Activated CD8-positive, alpha-beta T cell treated with anti-CD3 and anti-CD28 coated beads, Interleukin-2, amount 10 ng/mL, durations not matched to agents 7 days and 5 days (primary cell): ENCODE measurements at regions of chr12 and their contacts with region 1.

Region 1: GRCh38 chr12:69359531-69360347 is at the start of gene YEATS4:
- DNase-seq: peak; percentile 94
- ATAC-seq: peak; percentile 88
- H3K4me3 Mint-ChIP-seq: peak within 1 kb of the TSS; percentile 95
- H3K27ac Mint-ChIP-seq: peak within 1 kb of the TSS; percentile 92
- H3K4me1 Mint-ChIP-seq: peaks cover 33% of the 10 kb centered on the region
- H3K27me3 Mint-ChIP-seq: peaks cover 5% of the 10 kb centered on the region
- total RNA-seq, gene YEATS4: 49.9 to 51.0 TPM

Region 2: DNA sequence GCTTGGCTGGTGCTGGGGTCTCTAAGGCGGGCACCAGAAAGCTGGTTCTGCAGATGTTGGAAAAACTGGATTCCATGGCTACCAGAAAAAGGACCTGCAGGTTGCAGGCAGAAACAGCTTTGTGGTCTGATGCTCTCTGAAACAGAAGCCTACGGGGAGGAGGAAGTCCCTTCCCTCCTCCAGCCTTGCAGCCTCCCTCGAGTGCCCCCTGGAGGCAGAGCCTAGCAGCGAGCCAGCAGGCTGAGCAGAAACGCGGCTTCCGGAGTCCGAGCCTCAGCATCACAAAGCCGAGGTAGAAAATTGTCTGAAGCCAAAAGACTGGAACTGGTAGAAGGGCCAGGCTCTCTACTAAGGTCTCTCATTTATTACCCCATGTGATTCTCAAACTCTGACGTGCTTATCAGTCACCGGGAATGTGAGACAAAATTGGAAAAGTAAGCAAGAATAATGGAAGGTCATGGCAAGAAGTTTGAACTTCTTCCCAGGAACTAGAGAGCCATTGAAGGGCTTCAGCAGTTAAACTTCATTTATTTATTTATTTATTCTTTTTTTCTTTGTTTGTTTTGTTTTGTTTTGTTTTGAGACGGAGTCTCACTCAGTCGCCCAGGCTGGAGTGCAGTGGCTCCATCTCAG is 202.6 kb before region 1 on chr12:
- CTCF ChIA-PET with region 1: interaction called, 22 read pairs
- POLR2A ChIA-PET with region 1: interaction called, 6 read pairs
- DNase-seq: peak; percentile 95
- ATAC-seq: peak; percentile 93
- H3K4me3 Mint-ChIP-seq: peak overlapping the region; percentile 34
- H3K27ac Mint-ChIP-seq: peak overlapping the region; percentile 53
- H3K4me1 Mint-ChIP-seq: peaks cover 48% of the 10 kb centered on the region
- H3K27me3 Mint-ChIP-seq: peaks cover 3% of the 10 kb centered on the region

Region 3: DNA sequence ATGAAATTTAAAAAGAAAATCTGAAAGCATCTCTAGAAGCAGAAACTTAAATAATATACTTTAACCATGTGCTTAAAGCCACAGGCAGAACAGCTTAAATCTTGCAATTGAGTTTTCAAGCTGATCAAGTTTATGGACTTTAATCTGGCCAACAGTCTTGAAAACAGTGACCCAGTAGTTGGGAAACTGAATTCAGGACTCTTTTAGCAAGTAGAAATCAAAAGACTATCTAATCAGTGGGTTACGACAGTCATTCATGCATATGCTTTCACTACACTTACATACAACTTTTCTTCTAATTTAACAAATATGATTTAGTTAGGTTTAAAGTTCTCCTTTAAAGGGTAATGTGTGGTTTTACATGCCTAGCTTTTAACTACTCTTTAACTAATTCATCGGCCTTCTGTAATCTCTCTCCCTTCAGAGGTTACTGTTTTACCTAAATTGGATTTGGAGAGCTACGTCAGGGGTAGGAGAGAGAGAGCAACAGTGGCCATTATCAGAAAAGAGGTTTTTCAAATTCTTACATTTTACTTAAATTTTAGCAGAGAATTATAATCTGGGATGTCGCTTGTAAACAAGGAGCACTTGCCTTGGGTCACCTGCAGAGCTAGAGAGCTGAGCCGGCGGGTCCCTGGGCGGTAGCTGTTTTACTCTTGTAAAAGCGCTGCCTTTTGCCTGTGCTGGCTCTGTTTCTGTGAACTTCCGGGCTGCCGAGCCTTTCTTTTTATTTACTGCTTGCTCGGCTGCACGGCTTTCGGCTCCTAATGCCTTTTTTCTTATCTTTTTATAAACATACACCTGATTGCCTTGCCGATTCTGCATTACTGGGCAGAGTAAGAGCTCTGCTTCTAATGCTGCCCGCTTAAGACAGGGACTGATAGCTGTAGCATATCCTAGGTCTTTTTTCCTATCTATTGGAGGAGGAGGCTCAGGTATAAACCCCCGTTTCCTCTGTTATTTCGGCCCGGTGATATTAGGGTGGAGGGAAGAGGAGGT is 29.0 kb before region 1 on chr12:
- CTCF ChIA-PET with region 1: interaction called, 22 read pairs
- POLR2A ChIA-PET with region 1: interaction called, 18 read pairs
- DNase-seq: peak; percentile 73
- ATAC-seq: peak; percentile 85
- H3K4me3 Mint-ChIP-seq: peak overlapping the region; percentile 79
- H3K27ac Mint-ChIP-seq: peak overlapping the region; percentile 92
- H3K4me1 Mint-ChIP-seq: peaks cover 43% of the 10 kb centered on the region
- H3K27me3 Mint-ChIP-seq: no peaks in the 10 kb centered on the region

Region 4: GRCh38 chr12:69348162-69348938 is 11.4 kb before region 1 on chr12 and contains the start of gene LYZ:
- CTCF ChIA-PET with region 1: interaction called, 20 read pairs
- POLR2A ChIA-PET with region 1: no interaction called
- DNase-seq: no peak
- ATAC-seq: no peak
- H3K4me3 Mint-ChIP-seq: no peak within 1 kb of the TSS
- H3K27ac Mint-ChIP-seq: no peak within 1 kb of the TSS
- H3K4me1 Mint-ChIP-seq: peaks cover 5% of the 10 kb centered on the region
- H3K27me3 Mint-ChIP-seq: peaks cover 8% of the 10 kb centered on the region
- total RNA-seq, gene LYZ: not detected

Region 5: GRCh38 chr12:69470189-69471075 is 110.7 kb after region 1 on chr12 and contains the start of gene FRS2:
- CTCF ChIA-PET with region 1: interaction called, 10 read pairs
- POLR2A ChIA-PET with region 1: interaction called, 4 read pairs
- DNase-seq: peak; percentile 89
- ATAC-seq: peak; percentile 99
- H3K4me3 Mint-ChIP-seq: peak within 1 kb of the TSS; percentile 98
- H3K27ac Mint-ChIP-seq: peak within 1 kb of the TSS; percentile 97
- H3K4me1 Mint-ChIP-seq: peaks cover 34% of the 10 kb centered on the region
- H3K27me3 Mint-ChIP-seq: no peaks in the 10 kb centered on the region
- total RNA-seq, gene FRS2: 13.0 to 13.7 TPM

Region 6: DNA sequence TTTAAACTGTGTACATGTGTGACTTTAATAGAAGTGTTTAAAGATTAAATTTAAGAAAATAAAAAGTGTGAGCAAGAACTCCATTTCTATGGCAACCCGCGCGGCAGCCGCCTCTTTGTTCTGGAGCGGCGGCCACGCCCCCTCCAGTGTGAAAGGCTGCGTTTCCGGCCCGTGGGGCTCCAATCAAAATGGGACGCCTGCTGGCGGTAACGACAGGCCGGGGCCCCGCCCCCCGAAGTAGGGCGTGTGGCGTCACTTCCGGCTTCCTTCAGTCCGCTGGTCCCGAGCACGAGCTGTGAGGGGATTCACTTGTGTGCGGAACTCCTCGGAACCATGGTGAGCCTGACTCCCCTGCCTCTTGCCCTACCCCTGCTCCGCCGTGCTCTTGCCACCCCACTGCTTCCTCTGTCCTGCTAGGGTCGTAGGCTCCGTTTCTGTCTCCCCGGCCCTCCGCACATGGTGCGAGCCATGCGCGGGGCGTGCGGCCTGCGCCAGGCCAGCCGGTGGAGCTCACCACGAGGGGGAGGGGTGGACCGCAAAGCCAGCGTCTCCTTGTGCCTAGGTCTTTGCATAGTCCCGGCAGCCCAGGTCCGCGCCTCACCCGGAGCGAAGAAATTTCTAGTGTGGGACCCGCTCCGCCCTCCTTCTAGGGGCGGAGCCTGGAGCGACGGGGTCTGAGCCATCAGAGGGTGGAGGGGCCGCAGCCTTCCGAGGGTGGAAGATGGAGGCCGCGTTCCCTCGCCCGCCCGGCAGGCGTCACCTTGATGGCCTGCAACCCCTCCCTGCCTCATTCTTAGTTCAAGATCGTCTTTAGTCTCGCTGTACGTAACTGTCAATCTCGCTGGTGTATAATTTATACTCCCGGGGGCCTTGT is 225.7 kb after region 1 on chr12 and contains the start of gene CCT2:
- CTCF ChIA-PET with region 1: interaction called, 17 read pairs
- POLR2A ChIA-PET with region 1: interaction called, 5 read pairs
- DNase-seq: peak; percentile 98
- ATAC-seq: peak; percentile 92
- H3K4me3 Mint-ChIP-seq: peak within 1 kb of the TSS; percentile 96
- H3K27ac Mint-ChIP-seq: peak within 1 kb of the TSS; percentile 98
- H3K4me1 Mint-ChIP-seq: peaks cover 13% of the 10 kb centered on the region
- H3K27me3 Mint-ChIP-seq: no peaks in the 10 kb centered on the region
- total RNA-seq, gene CCT2: 238 to 252 TPM

Region 7: DNA sequence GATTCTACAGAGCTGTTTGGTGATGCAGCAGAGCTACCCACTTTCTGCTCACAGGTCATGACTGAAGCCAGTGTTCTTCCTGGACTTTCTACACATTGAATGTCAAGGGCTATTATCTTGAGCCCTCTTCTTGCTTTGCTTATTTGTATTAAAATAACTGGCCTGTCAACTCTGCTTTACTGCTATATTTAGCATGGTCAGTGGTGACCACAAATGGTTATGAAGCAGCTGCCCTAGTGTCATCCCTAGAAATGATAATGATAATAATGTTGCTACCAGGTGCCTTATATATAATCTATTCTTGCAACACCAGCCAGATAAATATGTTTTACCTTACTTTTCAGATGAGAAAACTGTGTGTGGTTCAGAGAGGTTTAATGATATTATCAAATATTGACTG is 253.6 kb after region 1 on chr12:
- CTCF ChIA-PET with region 1: no interaction called
- POLR2A ChIA-PET with region 1: no interaction called
- DNase-seq: no peak
- ATAC-seq: no peak
- H3K4me3 Mint-ChIP-seq: no peak overlapping the region
- H3K27ac Mint-ChIP-seq: no peak overlapping the region
- H3K4me1 Mint-ChIP-seq: no peaks in the 10 kb centered on the region
- H3K27me3 Mint-ChIP-seq: peaks cover 12% of the 10 kb centered on the region